Right ventricle myocardium superior (tissue), 1 donor: ENCODE measurements at regions of chr1 and their contacts with region 1.

Region 1: DNA sequence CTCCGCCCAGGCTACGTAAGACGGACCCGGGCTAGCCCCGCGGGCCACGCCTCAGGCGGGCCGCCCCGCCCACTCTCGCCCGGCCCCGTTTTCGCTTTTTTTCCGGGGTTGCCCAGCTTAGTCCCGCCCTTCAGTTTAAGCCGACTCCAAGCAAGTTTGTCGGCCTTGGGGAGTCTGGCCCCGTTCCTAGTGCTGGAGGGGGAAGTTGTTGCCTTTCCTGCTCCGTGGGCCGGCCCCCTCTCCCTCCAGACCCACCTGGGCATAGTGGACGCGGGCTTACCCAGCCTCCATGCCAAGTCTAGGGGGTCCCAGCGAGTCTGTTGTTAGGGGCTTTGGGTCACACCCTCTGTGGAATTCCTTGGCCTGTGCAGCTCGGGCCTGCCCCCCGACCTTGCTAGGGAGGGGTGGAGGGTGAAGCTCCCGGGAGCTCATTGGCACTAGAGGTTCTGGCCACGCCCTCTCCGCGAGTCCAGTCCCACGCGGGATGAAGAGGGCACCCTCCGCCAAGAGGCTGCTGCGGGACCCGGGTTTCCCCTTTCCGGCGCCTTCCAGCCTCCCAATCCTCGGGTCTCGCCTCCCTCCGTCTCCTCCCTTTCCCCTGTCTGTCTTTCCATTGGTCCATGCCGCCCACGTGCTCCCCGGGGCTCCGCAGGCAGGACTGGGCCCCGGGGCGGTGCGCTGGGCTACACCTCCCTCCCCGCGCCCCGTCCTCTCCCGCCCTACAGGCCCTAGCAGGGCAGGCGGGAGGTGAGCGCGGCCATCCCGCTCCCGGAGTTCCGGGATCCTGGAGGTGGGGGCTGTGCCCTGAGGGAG is 3.3 kb downstream of the RUSC1 start:
- DNase-seq: peak; percentile 97
- ATAC-seq: peak; percentile 85

Region 2: GRCh38 chr1:155250633-155251449 is 73.2 kb before region 1 on chr1:
- intact Hi-C with region 1: loop called (anchors 5 kb)
- DNase-seq: peak; percentile 96
- ATAC-seq: peak; percentile 87

Region 3: DNA sequence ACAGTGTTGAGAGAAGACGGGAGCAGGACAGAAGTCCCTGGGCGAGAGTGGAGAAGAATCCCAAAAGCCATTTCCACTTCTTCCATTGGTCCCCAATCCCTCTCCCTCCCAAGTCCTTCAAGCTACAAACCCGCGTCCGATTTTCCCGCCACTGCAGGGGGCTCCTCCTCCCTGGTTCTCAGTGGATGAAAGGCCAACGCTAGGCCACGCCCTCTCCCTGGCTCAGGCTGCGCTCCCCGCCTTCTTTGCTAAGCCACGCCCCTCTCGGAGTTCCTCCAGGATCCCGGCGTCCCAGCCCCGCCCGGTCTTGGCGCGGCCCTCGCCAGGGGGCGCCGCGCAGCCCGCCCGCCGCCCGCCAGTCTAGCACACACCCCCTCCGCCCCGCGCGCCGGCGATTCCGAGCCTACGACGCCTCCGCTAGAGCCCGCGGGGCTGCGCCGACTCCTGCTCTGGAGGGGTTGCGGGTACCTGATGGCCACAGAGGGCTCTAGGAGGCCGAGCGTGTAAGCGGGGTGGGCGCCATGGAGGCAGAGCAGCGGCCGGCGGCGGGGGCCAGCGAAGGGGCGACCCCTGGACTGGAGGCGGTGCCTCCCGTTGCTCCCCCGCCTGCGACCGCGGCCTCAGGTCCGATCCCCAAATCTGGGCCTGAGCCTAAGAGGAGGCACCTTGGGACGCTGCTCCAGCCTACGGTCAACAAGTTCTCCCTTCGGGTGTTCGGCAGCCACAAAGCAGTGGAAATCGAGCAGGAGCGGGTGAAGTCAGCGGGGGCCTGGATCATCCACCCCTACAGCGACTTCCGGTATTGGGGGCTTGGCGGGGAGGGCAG is 46.7 kb before region 1 on chr1 and contains the start of gene HCN3:
- intact Hi-C with region 1: loop called (anchors 5 kb)
- DNase-seq: peak; percentile 99
- ATAC-seq: peak; percentile 88
- total RNA-seq, gene HCN3: 1.4 TPM